ENCODE measurements at regions of chr5 and their contacts with region 1.

Region 1: GRCh38 chr5:180868960-180869359 is 7.9 kb upstream of the ZFP62 start:
- DNase-seq: peak; percentile 69 to 88
- H3K4me3 ChIP-seq: no peak overlapping the region
- H3K27ac ChIP-seq: no peak overlapping the region
- H3K4me1 ChIP-seq: no peaks in the 10 kb centered on the region
- H3K27me3 ChIP-seq: no peaks in the 10 kb centered on the region
- CTCF ChIP-seq: peak; percentile 91

Region 2: DNA sequence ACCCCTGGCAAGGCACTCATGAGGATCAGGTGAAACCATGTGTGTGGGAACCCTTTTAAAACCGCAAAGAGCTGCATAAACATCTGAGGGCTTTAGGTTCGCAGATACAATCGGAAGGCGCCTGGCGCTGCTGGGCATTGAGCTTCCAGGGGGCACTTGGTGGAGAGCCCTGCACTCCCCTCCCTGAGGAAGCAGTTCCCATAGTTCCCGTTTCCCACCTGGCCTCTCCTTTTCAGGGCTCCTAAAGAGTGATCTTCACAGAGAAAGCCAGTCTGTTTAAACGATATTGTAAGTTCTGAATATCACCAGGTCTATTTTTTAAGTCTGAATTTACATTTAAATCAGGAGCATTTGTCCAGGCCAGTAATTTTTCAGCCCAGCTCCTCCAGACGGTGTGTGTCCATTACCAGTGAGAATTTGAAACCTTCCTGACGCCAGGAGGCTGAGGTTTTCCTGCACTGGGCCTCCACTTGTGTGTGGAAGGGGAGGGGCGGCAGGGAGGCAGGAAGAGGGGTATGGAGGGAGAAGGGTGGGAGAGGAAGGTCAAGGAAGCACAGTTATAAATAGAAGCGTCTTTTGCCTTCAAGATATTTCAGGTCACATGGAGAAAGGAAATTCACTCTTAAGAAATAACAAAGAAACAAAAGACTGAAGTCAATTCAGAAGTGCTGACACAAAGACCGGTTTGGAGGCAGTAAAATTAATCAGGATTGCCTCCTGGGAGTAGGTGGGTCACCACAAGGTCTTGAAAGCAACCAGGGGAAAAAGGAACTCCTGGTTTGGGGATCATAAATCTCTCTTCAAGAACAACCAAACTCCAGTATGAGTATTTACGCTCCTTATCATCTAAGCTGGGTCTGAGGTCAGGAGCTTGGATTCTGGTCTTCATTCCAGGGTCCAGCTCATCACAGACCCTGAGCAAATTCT is 52.1 kb before region 1 on chr5:
- CTCF ChIA-PET with region 1: no interaction called
- POLR2A ChIA-PET with region 1: no interaction called
- intact Hi-C with region 1: no loop called
- DNase-seq: no peak
- H3K4me3 ChIP-seq: no peak overlapping the region
- H3K27ac ChIP-seq: no peak overlapping the region
- H3K4me1 ChIP-seq: peaks cover 11% of the 10 kb centered on the region
- H3K27me3 ChIP-seq: no peaks in the 10 kb centered on the region
- CTCF ChIP-seq: no peak

Region 3: DNA sequence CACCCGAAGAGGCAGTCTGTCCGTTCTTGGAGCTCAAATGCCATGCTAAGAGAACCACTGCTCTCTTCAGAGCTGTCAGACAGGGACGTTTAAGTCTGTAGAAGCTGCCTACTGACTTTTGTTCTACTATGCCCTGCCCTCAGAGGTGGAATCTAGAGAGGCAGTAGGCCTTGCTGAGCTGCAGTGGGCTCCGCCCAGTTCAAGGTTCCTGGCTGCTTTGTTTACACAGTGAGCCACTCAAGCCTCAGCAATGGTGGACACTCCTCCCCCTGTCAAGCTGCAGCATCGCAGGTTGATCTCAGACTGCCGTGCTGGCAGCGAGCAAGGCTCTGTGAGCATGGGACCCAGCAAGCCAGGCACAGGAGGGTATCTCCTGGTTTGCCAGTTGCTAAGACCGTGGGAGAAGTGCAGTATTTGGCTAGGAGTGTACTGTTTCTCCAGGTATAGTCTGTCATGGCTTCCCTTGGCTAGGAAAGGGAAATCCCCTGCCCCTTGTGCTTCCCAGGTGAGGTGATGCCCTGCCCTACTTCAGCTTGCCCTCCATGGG is 17.0 kb after region 1 on chr5:
- CTCF ChIA-PET with region 1: no interaction called
- POLR2A ChIA-PET with region 1: no interaction called
- intact Hi-C with region 1: no loop called
- DNase-seq: peak; percentile 73
- H3K4me3 ChIP-seq: no peak overlapping the region
- H3K27ac ChIP-seq: no peak overlapping the region
- H3K4me1 ChIP-seq: no peaks in the 10 kb centered on the region
- H3K27me3 ChIP-seq: no peaks in the 10 kb centered on the region; the same call in none of the 2 replicates
- CTCF ChIP-seq: no peak

Region 4: DNA sequence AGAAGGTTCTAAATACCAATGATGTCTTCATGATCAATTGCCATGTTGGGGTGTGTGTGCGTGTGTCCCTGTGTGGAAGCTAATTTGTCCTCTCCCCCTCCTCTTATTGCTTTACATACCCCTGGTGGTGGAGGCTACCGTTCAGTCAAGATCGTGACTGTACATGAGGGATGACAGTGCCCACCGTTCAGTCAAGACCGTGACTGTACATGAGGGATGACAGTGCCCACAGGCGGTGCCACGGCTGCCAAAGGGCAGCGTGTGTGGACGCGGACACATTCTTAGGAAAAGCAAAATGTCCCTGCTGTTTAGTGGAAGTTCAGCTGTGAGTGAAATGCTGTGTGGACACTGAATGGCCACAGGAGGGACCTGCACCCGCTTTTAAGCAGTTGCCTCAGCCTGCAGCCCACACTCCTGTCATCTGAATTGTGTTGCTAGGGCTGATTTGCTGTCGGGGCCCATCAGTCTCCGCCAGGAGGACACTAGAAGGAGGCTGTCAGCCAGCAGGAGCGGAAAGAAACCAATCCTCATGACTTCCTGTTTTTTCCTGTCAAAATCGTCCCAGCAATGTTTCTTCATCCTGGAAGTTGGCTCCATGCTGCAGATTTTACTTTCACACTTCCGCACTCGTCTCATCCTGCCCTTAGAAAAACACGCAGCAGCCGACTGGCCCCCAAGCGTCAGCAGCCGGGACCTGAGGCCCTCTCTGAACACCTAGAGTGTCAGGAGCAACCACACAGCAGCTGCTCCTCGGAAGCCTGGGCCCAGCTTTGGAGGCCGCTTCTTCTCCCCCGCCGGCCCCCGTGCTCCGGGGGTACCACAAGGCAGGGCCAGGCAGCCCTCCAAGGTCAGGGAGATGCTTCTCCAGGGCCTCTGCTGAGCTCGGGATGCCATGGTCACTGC is 252.9 kb after region 1 on chr5:
- CTCF ChIA-PET with region 1: no interaction called
- POLR2A ChIA-PET with region 1: interaction called, 15 read pairs
- intact Hi-C with region 1: no loop called
- DNase-seq: no peak
- H3K4me3 ChIP-seq: no peak overlapping the region
- H3K27ac ChIP-seq: no peak overlapping the region
- H3K4me1 ChIP-seq: peaks cover 22% of the 10 kb centered on the region
- H3K27me3 ChIP-seq: no peaks in the 10 kb centered on the region
- CTCF ChIP-seq: no peak

Region 5: DNA sequence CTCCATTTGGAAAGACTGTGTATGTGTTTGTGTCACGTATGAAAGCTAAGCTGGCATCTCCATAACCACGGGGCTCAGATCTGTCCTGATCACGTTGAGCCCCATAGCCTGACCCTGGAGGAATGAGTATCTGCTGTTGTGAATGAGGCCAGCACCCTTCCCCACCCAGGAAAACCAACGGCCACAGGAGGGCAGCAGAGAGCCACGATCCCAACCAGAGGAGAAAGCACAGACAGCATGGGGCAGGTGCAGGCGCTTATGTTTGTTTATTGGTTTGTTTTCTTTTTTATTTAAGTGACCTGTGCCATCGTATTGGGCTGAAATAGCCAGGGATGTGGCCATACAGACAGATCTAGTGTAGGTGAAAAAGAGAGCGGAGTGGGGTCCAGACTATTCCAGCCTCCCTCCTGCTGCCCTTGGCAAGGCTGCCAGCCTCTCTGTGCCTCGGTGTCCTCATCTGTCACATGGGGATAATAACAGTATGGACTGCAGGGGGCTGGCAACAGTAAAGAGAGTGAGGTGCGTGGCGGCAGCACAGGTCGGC is 290.4 kb after region 1 on chr5:
- CTCF ChIA-PET with region 1: no interaction called
- POLR2A ChIA-PET with region 1: no interaction called
- intact Hi-C with region 1: loop called (anchors 1 kb)
- DNase-seq: peak; percentile 75 to 93
- H3K4me3 ChIP-seq: no peak overlapping the region
- H3K27ac ChIP-seq: peak overlapping the region; percentile 84
- H3K4me1 ChIP-seq: peaks cover 17% of the 10 kb centered on the region
- H3K27me3 ChIP-seq: no peaks in the 10 kb centered on the region
- CTCF ChIP-seq: peak; percentile 90

Region 6: DNA sequence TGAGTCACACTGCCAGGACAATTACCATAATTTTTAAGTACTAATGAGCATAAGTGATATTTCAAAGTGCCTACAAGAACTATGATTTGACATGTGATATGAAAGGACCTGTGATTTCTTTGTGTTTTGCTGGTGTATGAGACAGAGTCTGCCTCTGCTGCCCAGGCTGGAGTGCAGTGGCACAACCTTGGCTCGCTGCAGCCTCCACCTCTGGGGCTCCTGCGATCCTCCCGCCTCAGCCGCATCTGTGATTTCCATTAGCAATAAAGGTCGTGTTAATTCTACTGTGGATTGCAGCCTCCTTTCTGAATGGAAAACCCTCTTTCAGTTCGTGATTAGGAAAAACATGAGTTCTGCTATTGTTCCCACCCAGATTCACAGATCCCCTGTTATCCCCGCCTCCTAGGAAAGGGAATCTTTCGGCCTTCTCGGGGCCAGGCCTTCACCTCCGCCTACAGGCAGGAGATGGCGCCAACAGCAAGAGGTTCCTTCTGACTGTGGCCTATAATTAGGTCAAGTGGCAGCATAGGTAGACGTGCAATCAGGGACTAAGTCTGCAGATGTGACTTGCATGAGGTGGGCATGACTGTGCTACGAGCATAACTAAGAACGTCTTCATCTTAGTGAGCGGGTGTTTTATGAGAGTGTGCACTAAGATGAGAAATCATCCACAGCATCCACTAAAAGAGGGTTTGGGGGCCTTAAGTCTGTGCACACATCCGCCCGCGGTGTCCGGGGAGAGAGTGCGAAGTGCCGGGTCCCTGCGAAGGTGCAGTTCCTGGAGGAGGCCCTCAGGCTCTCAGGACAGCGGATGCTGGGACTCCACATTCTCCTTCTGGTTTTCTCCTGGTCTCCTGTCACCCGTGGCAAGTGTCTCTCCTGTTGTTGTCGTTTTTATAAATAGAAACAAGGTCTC is 312.9 kb after region 1 on chr5:
- CTCF ChIA-PET with region 1: no interaction called
- POLR2A ChIA-PET with region 1: no interaction called
- intact Hi-C with region 1: loop called (anchors 2 kb)
- DNase-seq: peak; percentile 76 to 78
- H3K4me3 ChIP-seq: no peak overlapping the region
- H3K27ac ChIP-seq: no peak overlapping the region
- H3K4me1 ChIP-seq: peaks cover 18% of the 10 kb centered on the region; the same call in 1 of the 2 replicates
- H3K27me3 ChIP-seq: no peaks in the 10 kb centered on the region
- CTCF ChIP-seq: peak; percentile 76

Measured in PC-9 (cell line).